ENCODE measurements at regions of chr5 and their contacts with region 1.

Region 1: GRCh38 chr5:171342362-171343111 is 33.5 kb downstream of the TLX3 start:
- DNase-seq: peak; percentile 6 to 28 (median 25)
- H3K4me3 ChIP-seq: no peak overlapping the region
- H3K4me3 Mint-ChIP-seq: no peak overlapping the region
- H3K27ac ChIP-seq: no peak overlapping the region
- H3K27ac Mint-ChIP-seq: peak overlapping the region in 1 of 7 donors; percentile 50
- H3K4me1 ChIP-seq: no peaks in the 10 kb centered on the region
- H3K4me1 Mint-ChIP-seq: no peaks in the 10 kb centered on the region
- H3K27me3 ChIP-seq: peaks cover 5 to 12% of the 10 kb centered on the region in 2 donors
- H3K27me3 Mint-ChIP-seq: peaks cover 26 to 36% (median 36%) of the 10 kb centered on the region in 3 donors
- CTCF ChIP-seq: peak; percentile 67

Region 2: GRCh38 chr5:170638454-170639220 is 703.9 kb before region 1 on chr5:
- intact Hi-C with region 1: loop called in 1 of 2 experiments (anchors 5 kb)
- DNase-seq: peak; percentile 27 to 46 (median 35)
- H3K4me3 ChIP-seq: no peak overlapping the region
- H3K4me3 Mint-ChIP-seq: peak overlapping the region in 1 of 2 donors; percentile 14
- H3K27ac ChIP-seq: no peak overlapping the region
- H3K27ac Mint-ChIP-seq: no peak overlapping the region
- H3K4me1 ChIP-seq: peaks cover 4 to 5% of the 10 kb centered on the region in 2 donors
- H3K4me1 Mint-ChIP-seq: peaks cover 7% of the 10 kb centered on the region
- H3K27me3 ChIP-seq: no peaks in the 10 kb centered on the region
- H3K27me3 Mint-ChIP-seq: peaks cover 9 to 18% (median 11%) of the 10 kb centered on the region in 3 donors
- CTCF ChIP-seq: peak; percentile 95

Region 3: GRCh38 chr5:170747851-170748250 is 594.7 kb before region 1 on chr5:
- intact Hi-C with region 1: loop called (anchors 10 kb)
- DNase-seq: no peak
- H3K4me3 ChIP-seq: no peak overlapping the region
- H3K4me3 Mint-ChIP-seq: no peak overlapping the region
- H3K27ac ChIP-seq: no peak overlapping the region
- H3K27ac Mint-ChIP-seq: no peak overlapping the region
- H3K4me1 ChIP-seq: no peaks in the 10 kb centered on the region
- H3K4me1 Mint-ChIP-seq: peaks cover 3% of the 10 kb centered on the region
- H3K27me3 ChIP-seq: peaks cover 4 to 27% of the 10 kb centered on the region in 2 donors
- H3K27me3 Mint-ChIP-seq: peaks cover 34 to 61% (median 43%) of the 10 kb centered on the region in 3 donors
- CTCF ChIP-seq: peak; percentile 11

Measured in CD14-positive monocyte (primary cell).